Sigmoid colon (tissue), 7 donors: ENCODE measurements at regions of chr11 and their contacts with region 1.

Region 1: DNA sequence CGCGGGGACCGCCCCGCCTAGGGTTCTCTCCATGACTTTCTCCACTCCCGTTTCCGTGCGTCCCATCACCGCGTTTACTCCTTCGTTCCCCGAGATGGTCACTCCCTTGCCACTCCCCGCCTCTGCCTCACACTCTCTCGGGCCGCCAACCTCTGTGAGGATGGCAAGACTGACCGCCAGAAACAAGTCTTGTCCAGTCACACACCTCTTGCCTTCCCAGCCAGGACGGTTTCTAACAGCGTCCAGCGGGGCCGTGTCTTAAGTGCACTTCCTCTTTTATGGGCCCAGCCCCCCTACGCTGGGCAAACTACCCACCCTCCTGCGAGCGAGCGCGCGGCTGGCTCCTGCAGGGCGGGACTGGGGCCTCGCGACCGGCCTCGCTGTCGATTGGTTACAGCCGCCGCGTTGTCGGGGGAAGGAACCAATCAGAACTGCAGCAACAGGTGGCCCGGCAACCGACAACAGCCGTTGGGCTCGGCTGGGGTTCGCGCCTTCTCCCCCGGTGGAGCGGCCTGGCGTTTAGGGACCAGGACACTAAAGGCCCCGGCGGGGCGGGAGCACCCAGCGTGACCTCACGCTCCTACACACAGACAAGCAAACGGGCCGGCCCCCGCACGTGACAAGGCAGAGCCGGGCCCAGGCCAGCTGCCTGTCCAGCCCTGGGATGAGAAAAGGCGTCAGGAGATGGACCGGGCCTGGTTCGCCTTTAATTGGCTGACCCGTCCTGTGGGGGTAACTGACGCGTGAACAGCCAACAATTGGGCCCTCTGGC is 512 bp upstream of the UCP2 start:
- DNase-seq: peak; percentile 97
- H3K4me3 ChIP-seq: peak overlapping the region; percentile 44 to 65 (median 57)
- H3K27ac ChIP-seq: peak overlapping the region; percentile 82 to 95 (median 90)
- H3K4me1 ChIP-seq: peaks cover 0 to 19% (median 14%) of the 10 kb centered on the region in 4 donors
- H3K27me3 ChIP-seq: no peaks in the 10 kb centered on the region
- CTCF ChIP-seq: no peak
- EP300 ChIP-seq: peak in 1 of 4 donors; percentile 14
- POLR2A ChIP-seq: peak; percentile 18 to 42

Region 2: GRCh38 chr11:73393479-73394380 is 589.4 kb before region 1 on chr11:
- intact Hi-C with region 1: no loop called
- DNase-seq: peak; percentile 83
- H3K4me3 ChIP-seq: no peak overlapping the region
- H3K27ac ChIP-seq: no peak overlapping the region
- H3K4me1 ChIP-seq: no peaks in the 10 kb centered on the region
- H3K27me3 ChIP-seq: no peaks in the 10 kb centered on the region
- CTCF ChIP-seq: peak; percentile 58 to 82 (median 80)
- EP300 ChIP-seq: no peak
- POLR2A ChIP-seq: no peak

Region 3: GRCh38 chr11:73907191-73907590 is 76.0 kb before region 1 on chr11:
- intact Hi-C with region 1: no loop called
- DNase-seq: no peak
- H3K4me3 ChIP-seq: no peak overlapping the region
- H3K27ac ChIP-seq: no peak overlapping the region
- H3K4me1 ChIP-seq: no peaks in the 10 kb centered on the region
- H3K27me3 ChIP-seq: no peaks in the 10 kb centered on the region
- CTCF ChIP-seq: no peak
- EP300 ChIP-seq: no peak
- POLR2A ChIP-seq: no peak

Region 4: DNA sequence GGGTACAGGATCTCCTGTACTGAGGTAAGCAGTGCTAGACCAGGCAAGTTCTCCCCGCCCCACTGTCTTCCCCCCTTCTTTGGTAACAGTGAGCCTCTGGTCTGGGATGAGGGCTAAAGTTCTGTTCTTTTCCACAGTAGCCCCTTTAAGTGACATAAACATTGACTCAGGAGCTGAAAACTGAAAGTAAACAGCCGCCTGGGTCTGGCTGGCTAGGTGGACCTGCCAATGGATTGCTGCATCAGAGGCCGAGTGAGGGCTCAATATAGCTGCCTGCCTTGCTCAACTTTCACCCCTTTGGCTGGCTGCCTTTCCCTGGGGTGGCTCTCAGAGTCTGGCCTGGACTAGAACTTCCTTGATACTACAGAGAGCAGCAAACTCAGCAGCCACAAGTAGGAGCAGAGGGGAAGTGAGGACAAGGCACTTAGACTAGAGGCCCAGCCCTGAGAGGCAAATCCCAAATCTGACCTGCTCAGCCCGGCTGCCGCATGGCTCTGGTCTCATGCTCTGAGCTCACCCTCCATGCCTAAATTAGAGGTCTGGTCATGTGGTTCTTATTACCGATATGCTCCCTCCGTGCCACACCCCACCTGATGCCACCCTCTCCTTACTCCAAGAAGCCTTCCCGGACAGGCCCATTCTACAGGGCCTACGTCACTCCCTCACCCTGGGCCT is 35.3 kb after region 1 on chr11:
- intact Hi-C with region 1: loop called (anchors 2 kb)
- DNase-seq: peak; percentile 97
- H3K4me3 ChIP-seq: no peak overlapping the region
- H3K27ac ChIP-seq: peak overlapping the region; percentile 53 to 84 (median 72)
- H3K4me1 ChIP-seq: peaks cover 0 to 24% (median 22%) of the 10 kb centered on the region in 4 donors
- H3K27me3 ChIP-seq: no peaks in the 10 kb centered on the region
- CTCF ChIP-seq: no peak
- EP300 ChIP-seq: no peak
- POLR2A ChIP-seq: no peak